ENCODE measurements at regions of chr3 and their contacts with region 1.

Region 1: DNA sequence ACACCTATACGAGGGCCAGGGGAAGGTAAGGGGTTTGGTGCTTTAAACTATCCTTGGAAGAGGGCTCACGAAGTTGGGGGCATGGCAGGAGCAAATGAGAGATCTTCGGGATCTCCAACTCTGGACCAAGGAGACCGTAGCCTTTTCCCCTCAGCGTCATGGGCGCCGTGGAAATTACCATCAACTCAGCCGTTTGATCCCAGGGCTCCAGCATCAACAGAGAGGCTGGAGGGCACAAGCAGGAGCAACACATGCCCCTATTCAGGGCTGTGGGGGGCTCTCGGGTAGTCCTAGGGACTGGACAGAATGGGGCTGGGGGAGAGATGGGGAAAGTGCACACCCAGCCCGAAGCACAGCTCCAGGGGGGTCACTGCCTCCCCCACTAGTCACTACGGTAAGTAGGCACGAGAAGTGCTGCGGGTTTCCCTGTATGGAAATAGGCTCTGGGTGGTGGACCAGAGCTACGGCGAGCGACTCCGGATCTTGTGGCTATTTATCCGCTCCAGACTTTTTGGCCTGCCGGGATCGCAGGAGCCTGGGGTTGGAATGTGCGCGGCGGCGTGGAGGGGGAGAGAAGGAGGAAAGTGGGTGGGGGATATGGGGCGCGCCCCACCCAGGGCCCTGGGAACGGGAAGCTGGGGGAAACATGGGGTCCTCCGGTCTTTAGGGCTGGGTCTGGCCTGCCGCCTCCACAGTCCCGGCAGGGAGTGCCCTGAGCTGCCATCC is 539 bp upstream of the LAMB2 start:
- DNase-seq: peak; percentile 81
- ATAC-seq: peak; percentile 72
- H3K4me3 Mint-ChIP-seq: peak overlapping the region; percentile 89
- H3K27ac Mint-ChIP-seq: peak overlapping the region; percentile 89
- H3K4me1 Mint-ChIP-seq: peaks cover 12% of the 10 kb centered on the region
- H3K27me3 Mint-ChIP-seq: peaks cover 5% of the 10 kb centered on the region
- CTCF ChIP-seq: no peak

Region 2: GRCh38 chr3:49120438-49121131 is 12.8 kb before region 1 on chr3 and contains the start of gene USP19:
- CTCF ChIA-PET with region 1: interaction called, 16 read pairs
- POLR2A ChIA-PET with region 1: interaction called, 5 read pairs
- DNase-seq: peak; percentile 93
- ATAC-seq: peak; percentile 95
- H3K4me3 Mint-ChIP-seq: peak within 1 kb of the TSS; percentile 82
- H3K27ac Mint-ChIP-seq: peak within 1 kb of the TSS; percentile 87
- H3K4me1 Mint-ChIP-seq: peaks cover 4% of the 10 kb centered on the region
- H3K27me3 Mint-ChIP-seq: no peaks in the 10 kb centered on the region
- CTCF ChIP-seq: no peak
- total RNA-seq, gene USP19: 72.4 to 75.8 TPM (median 73.3 TPM) in 3 replicates